ENCODE measurements at regions of chr2 and their contacts with region 1.

Region 1: GRCh38 chr2:230007931-230008707 is 60.6 kb downstream of the SLC16A14 start:
- DNase-seq: peak; percentile 46 to 81 (median 53)
- ATAC-seq: peak; percentile 53
- H3K4me3 ChIP-seq: no peak overlapping the region
- H3K27ac ChIP-seq: no peak overlapping the region
- H3K4me1 ChIP-seq: peaks cover 0 to 31% of the 10 kb centered on the region in 2 experiments; a peak in 3 of 5 replicates
- H3K27me3 ChIP-seq: no peaks in the 10 kb centered on the region
- CTCF ChIP-seq: peak; percentile 66 to 78 (median 69)
- EP300 ChIP-seq: no peak
- POLR2A ChIP-seq: no peak
- RAD21 ChIP-seq: peak; percentile 76 to 79

Region 2: DNA sequence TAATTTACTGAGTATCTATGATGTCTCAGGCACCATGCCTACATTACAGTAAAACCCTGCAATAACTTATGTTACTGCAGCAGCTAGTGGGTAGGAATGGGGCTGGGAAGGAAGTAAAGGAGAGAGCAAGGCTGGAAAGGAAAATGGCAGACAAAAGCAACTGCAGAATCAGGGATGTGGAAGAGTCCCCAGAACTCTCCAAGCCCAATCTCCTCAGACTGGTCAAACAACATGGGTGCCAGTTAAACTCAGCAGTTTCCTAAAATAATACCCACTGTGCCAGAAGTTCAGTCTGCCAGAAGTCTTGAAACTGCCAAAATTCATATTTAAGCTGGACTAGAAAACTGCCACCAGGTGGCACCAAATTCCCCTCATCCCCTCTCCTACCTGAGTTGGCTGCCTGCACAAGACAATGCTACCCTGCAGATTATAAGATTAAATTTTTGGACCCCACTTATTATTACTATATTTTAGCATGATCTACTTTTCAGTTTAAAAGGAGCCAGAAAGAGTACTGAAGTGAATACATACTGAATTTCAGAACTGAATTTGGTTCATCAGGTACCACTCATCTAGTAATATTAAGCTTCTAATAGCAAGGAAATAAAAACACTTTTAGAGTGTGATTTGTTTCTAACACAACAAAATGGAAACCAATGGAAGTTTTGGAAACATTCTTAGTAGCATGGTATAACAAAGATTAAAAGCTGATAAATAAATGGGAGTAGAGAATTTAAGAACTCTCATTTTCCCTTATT is 206.9 kb before region 1 on chr2:
- CTCF ChIA-PET with region 1: no interaction called
- POLR2A ChIA-PET with region 1: no interaction called
- in situ Hi-C with region 1: no loop called
- intact Hi-C with region 1: loop called (anchors 10 kb)
- DNase-seq: peak; percentile 35 to 64 (median 46)
- ATAC-seq: peak; percentile 77
- H3K4me3 ChIP-seq: no peak overlapping the region
- H3K27ac ChIP-seq: no peak overlapping the region
- H3K4me1 ChIP-seq: no peaks in the 10 kb centered on the region
- H3K27me3 ChIP-seq: no peaks in the 10 kb centered on the region
- CTCF ChIP-seq: peak; percentile 47 to 63 (median 49)
- EP300 ChIP-seq: no peak
- POLR2A ChIP-seq: no peak
- RAD21 ChIP-seq: peak; percentile 33 to 40; a peak in 2 of 4 replicates

Region 3: GRCh38 chr2:229884775-229885699 is 123.1 kb before region 1 on chr2:
- CTCF ChIA-PET with region 1: no interaction called
- POLR2A ChIA-PET with region 1: no interaction called
- in situ Hi-C with region 1: no loop called
- intact Hi-C with region 1: no loop called
- DNase-seq: no peak
- ATAC-seq: no peak
- H3K4me3 ChIP-seq: no peak overlapping the region
- H3K27ac ChIP-seq: no peak overlapping the region
- H3K4me1 ChIP-seq: no peaks in the 10 kb centered on the region
- H3K27me3 ChIP-seq: no peaks in the 10 kb centered on the region
- CTCF ChIP-seq: no peak
- EP300 ChIP-seq: no peak
- POLR2A ChIP-seq: no peak
- RAD21 ChIP-seq: no peak

Region 4: DNA sequence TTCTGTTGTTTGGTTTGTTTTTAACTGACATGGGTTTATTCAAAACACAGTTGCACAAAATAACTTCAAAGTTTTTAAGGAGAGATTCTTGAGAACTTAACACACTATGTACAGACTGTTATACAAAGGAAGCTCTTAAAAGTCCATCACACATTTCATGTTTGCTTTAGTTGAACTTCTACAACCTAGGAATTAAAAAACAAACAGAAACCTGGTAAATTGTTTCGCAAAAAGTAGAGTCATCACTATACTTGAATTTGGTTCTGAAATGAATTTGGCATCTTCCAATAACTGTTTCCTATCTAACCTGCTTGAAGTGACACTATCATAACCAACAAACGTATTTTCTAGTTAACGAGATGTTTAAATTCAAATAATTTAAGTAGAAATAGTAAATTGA is 108.1 kb before region 1 on chr2:
- CTCF ChIA-PET with region 1: no interaction called
- POLR2A ChIA-PET with region 1: no interaction called
- in situ Hi-C with region 1: no loop called
- intact Hi-C with region 1: no loop called
- DNase-seq: no peak
- ATAC-seq: no peak
- H3K4me3 ChIP-seq: no peak overlapping the region
- H3K27ac ChIP-seq: no peak overlapping the region
- H3K4me1 ChIP-seq: no peaks in the 10 kb centered on the region
- H3K27me3 ChIP-seq: no peaks in the 10 kb centered on the region
- CTCF ChIP-seq: no peak
- EP300 ChIP-seq: no peak
- POLR2A ChIP-seq: no peak
- RAD21 ChIP-seq: no peak

Region 5: DNA sequence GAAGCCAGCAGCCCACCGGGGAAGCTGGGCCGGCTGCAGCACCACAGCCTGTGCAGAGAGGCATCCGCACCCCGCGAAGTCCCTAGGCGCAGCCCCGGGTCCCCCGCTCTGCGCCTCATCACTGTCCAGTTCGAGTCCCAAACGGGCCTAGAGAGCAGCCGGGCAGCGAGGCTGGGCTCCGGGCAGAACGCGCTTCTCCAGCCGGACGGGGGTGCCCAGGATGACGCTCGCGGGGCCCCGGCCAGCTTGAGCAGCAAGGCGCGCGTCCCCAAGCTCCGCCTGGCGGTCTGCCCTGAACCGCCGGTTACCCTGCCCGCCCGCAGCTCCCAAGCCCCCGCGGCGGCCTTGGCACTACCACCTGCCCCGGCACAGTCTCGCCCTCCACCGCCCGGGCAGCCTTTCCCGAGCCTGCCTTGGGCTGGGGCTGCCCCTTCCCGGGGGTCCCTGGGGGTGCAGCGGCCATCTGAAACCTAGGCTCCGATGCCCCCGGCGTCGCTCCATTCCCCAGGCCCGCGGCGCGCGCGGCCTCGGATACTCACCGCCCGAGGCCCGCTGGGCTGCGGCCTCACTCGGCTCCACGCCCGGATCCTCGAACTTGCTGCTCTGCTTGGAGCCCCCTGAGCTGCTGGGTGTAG is 60.0 kb after region 1 on chr2:
- CTCF ChIA-PET with region 1: no interaction called
- POLR2A ChIA-PET with region 1: no interaction called
- in situ Hi-C with region 1: no loop called
- intact Hi-C with region 1: loop called (anchors 10 kb)
- DNase-seq: no peak
- ATAC-seq: no peak
- H3K4me3 ChIP-seq: no peak overlapping the region
- H3K27ac ChIP-seq: no peak overlapping the region
- H3K4me1 ChIP-seq: peaks cover 0 to 11% of the 10 kb centered on the region in 2 experiments; a peak in 3 of 5 replicates
- H3K27me3 ChIP-seq: peaks cover 0 to 35% of the 10 kb centered on the region in 2 experiments; a peak in 2 of 5 replicates
- CTCF ChIP-seq: no peak
- EP300 ChIP-seq: no peak
- POLR2A ChIP-seq: no peak
- RAD21 ChIP-seq: no peak

Region 6: DNA sequence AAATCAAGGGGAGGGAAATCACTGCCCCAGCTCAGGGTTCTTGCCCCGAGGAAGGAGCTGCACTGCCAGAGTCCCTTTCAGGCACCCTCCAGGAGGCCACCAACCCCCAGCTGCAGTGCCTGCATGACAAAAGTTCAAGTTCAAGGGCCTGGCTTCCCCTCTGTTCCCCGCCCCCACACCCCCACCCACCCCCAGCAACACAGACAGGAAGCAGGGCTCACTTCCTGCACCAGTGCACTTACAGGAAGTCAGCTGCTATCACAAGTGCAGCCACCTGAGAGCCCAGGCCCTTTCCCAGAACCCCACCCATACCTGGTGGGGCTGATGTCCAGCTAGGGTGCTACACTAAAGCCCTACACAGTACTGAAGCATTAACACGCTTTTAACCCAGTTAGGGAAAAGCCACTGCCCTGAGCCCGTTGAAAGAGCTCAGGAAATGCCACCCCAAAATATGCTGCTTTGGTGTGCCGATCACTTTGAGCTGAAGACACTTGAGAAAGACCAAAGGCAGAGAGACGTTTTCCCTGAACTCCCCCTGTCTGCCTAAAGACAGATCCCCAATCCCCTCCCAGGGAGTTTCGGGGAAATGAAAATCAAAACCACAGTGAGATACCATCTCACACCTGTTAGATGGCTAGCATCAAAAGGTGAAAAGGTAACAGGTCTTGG is 594.6 kb after region 1 on chr2:
- CTCF ChIA-PET with region 1: no interaction called
- POLR2A ChIA-PET with region 1: no interaction called
- in situ Hi-C with region 1: no loop called
- intact Hi-C with region 1: loop called (anchors 5 kb)
- DNase-seq: peak in 2 of 4 experiments; percentile 21 to 25
- ATAC-seq: peak; percentile 66
- H3K4me3 ChIP-seq: no peak overlapping the region
- H3K27ac ChIP-seq: no peak overlapping the region
- H3K4me1 ChIP-seq: no peaks in the 10 kb centered on the region
- H3K27me3 ChIP-seq: no peaks in the 10 kb centered on the region
- CTCF ChIP-seq: no peak
- EP300 ChIP-seq: no peak
- POLR2A ChIP-seq: no peak
- RAD21 ChIP-seq: no peak

Region 7: GRCh38 chr2:230824406-230824978 is 816.4 kb after region 1 on chr2:
- CTCF ChIA-PET with region 1: interaction called, 3 read pairs
- POLR2A ChIA-PET with region 1: no interaction called
- in situ Hi-C with region 1: loop called (anchors 25 kb)
- intact Hi-C with region 1: no loop called
- DNase-seq: peak; percentile 58 to 81 (median 61)
- ATAC-seq: peak; percentile 86
- H3K4me3 ChIP-seq: no peak overlapping the region
- H3K27ac ChIP-seq: no peak overlapping the region
- H3K4me1 ChIP-seq: peaks cover 0 to 16% of the 10 kb centered on the region in 2 experiments; a peak in 2 of 5 replicates
- H3K27me3 ChIP-seq: peaks cover 0 to 11% of the 10 kb centered on the region in 2 experiments; a peak in 2 of 5 replicates
- CTCF ChIP-seq: peak; percentile 65 to 71 (median 65)
- EP300 ChIP-seq: no peak
- POLR2A ChIP-seq: no peak
- RAD21 ChIP-seq: peak; percentile 58 to 71

Measured in K562 (cell line).